ENCODE measurements at regions of chr15 and their contacts with region 1.

Region 1: GRCh38 chr15:44663409-44664308 is at the start of gene SPG11:
- DNase-seq: peak; percentile 99
- ATAC-seq: peak; percentile 89
- H3K4me3 Mint-ChIP-seq: peak within 1 kb of the TSS; percentile 93
- H3K27ac Mint-ChIP-seq: peak within 1 kb of the TSS; percentile 97
- H3K4me1 Mint-ChIP-seq: peaks cover 59% of the 10 kb centered on the region
- H3K27me3 Mint-ChIP-seq: no peaks in the 10 kb centered on the region
- CTCF ChIP-seq: peak; percentile 86
- total RNA-seq, gene SPG11: 68.6 to 71.5 TPM

Region 2: GRCh38 chr15:44033894-44034293 is 629.8 kb before region 1 on chr15:
- CTCF ChIA-PET with region 1: no interaction called
- POLR2A ChIA-PET with region 1: no interaction called
- intact Hi-C with region 1: no loop called
- DNase-seq: no peak
- ATAC-seq: no peak
- H3K4me3 Mint-ChIP-seq: no peak overlapping the region
- H3K27ac Mint-ChIP-seq: no peak overlapping the region
- H3K4me1 Mint-ChIP-seq: peaks cover 5% of the 10 kb centered on the region
- H3K27me3 Mint-ChIP-seq: peaks cover 29% of the 10 kb centered on the region
- CTCF ChIP-seq: no peak

Region 3: GRCh38 chr15:44554934-44555723 is 108.5 kb before region 1 on chr15:
- CTCF ChIA-PET with region 1: no interaction called
- POLR2A ChIA-PET with region 1: no interaction called
- intact Hi-C with region 1: no loop called
- DNase-seq: no peak
- ATAC-seq: no peak
- H3K4me3 Mint-ChIP-seq: no peak overlapping the region
- H3K27ac Mint-ChIP-seq: peak overlapping the region; percentile 33
- H3K4me1 Mint-ChIP-seq: peaks cover 16% of the 10 kb centered on the region
- H3K27me3 Mint-ChIP-seq: no peaks in the 10 kb centered on the region
- CTCF ChIP-seq: no peak

Region 4: DNA sequence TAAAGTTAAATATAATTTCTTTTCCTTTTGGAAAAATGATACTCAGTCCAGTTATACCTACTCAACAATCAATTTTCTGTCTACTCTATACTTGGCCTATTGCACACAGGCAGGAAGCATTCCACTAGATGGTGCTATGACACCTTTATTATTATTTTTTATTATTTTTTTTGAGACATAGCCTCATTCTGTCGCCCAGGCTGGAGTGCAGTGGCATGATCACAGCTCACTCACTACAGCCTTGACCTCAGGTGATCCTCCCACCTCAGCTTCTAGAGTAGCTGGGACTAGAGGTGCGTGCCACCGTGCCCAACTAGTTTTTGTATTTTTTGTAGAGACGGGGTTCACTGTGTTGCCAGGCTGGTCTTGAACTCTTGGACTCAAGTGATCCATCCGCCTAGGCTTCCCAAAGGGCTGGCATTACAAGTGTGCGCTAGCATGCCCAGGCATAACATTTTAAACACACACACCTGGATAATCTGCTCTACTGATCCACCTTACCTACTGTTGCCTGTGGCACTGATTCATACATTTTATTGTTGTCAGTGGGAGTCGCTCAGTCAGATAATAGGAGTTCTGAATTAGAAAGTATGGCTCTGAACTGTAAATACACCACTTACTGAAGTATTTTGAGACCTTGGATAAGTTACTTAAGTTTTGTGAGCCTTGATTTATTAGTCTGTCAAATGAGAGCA is 70.5 kb before region 1 on chr15:
- CTCF ChIA-PET with region 1: interaction called, 12 read pairs
- POLR2A ChIA-PET with region 1: interaction called, 9 read pairs
- intact Hi-C with region 1: no loop called
- DNase-seq: peak; percentile 21
- ATAC-seq: peak; percentile 73
- H3K4me3 Mint-ChIP-seq: no peak overlapping the region
- H3K27ac Mint-ChIP-seq: peak overlapping the region; percentile 32
- H3K4me1 Mint-ChIP-seq: peaks cover 27% of the 10 kb centered on the region
- H3K27me3 Mint-ChIP-seq: no peaks in the 10 kb centered on the region
- CTCF ChIP-seq: peak; percentile 68

Region 5: GRCh38 chr15:44682211-44682610 is 18.6 kb after region 1 on chr15:
- CTCF ChIA-PET with region 1: interaction called, 37 read pairs
- POLR2A ChIA-PET with region 1: interaction called, 75 read pairs
- intact Hi-C with region 1: no loop called
- DNase-seq: no peak
- ATAC-seq: peak; percentile 40
- H3K4me3 Mint-ChIP-seq: peak overlapping the region; percentile 31
- H3K27ac Mint-ChIP-seq: peak overlapping the region; percentile 90
- H3K4me1 Mint-ChIP-seq: peaks cover 78% of the 10 kb centered on the region
- H3K27me3 Mint-ChIP-seq: no peaks in the 10 kb centered on the region
- CTCF ChIP-seq: no peak

Region 6: DNA sequence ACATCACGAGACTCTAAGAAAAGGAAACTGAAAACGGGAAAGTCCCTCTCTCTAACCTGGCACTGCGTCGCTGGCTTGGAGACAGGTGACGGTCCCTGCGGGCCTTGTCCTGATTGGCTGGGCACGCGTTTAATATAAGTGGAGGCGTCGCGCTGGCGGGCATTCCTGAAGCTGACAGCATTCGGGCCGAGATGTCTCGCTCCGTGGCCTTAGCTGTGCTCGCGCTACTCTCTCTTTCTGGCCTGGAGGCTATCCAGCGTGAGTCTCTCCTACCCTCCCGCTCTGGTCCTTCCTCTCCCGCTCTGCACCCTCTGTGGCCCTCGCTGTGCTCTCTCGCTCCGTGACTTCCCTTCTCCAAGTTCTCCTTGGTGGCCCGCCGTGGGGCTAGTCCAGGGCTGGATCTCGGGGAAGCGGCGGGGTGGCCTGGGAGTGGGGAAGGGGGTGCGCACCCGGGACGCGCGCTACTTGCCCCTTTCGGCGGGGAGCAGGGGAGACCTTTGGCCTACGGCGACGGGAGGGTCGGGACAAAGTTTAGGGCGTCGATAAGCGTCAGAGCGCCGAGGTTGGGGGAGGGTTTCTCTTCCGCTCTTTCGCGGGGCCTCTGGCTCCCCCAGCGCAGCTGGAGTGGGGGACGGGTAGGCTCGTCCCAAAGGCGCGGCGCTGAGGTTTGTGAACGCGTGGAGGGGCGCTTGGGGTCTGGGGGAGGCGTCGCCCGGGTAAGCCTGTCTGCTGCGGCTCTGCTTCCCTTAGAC is 47.9 kb after region 1 on chr15 and contains the start of gene B2M:
- CTCF ChIA-PET with region 1: interaction called, 197 read pairs
- POLR2A ChIA-PET with region 1: interaction called, 1,862 read pairs
- intact Hi-C with region 1: loop called (anchors 1 kb)
- DNase-seq: peak; percentile 94
- ATAC-seq: peak; percentile 83
- H3K4me3 Mint-ChIP-seq: peak within 1 kb of the TSS; percentile 94
- H3K27ac Mint-ChIP-seq: peak within 1 kb of the TSS; percentile 100
- H3K4me1 Mint-ChIP-seq: peaks cover 40% of the 10 kb centered on the region
- H3K27me3 Mint-ChIP-seq: no peaks in the 10 kb centered on the region
- CTCF ChIP-seq: no peak
- total RNA-seq, gene B2M: 4,476 to 4,587 TPM

Region 7: GRCh38 chr15:44728576-44729407 is 65.1 kb after region 1 on chr15:
- CTCF ChIA-PET with region 1: interaction called, 150 read pairs
- POLR2A ChIA-PET with region 1: interaction called, 1,862 read pairs
- intact Hi-C with region 1: no loop called
- DNase-seq: peak; percentile 98
- ATAC-seq: peak; percentile 78
- H3K4me3 Mint-ChIP-seq: peak overlapping the region; percentile 99
- H3K27ac Mint-ChIP-seq: peak overlapping the region; percentile 100
- H3K4me1 Mint-ChIP-seq: peaks cover 61% of the 10 kb centered on the region
- H3K27me3 Mint-ChIP-seq: no peaks in the 10 kb centered on the region
- CTCF ChIP-seq: no peak

Measured in activated CD8-positive, alpha-beta T cell treated with anti-CD3 and anti-CD28 coated beads for 36 hours (primary cell).